ENCODE measurements at regions of chr7 and their contacts with region 1.

Region 1: GRCh38 chr7:134778941-134779740 is at the start of gene CALD1:
- DNase-seq: peak; percentile 99
- H3K4me3 ChIP-seq: peak within 1 kb of the TSS; percentile 54 to 100 (median 98)
- H3K27ac ChIP-seq: peak within 1 kb of the TSS; percentile 97
- H3K4me1 ChIP-seq: peaks cover 51% of the 10 kb centered on the region
- H3K27me3 ChIP-seq: no peaks in the 10 kb centered on the region
- CTCF ChIP-seq: no peak
- POLR2A ChIP-seq: peak; percentile 98
- total RNA-seq, gene CALD1: 307 and 313 TPM in 2 replicates

Region 2: DNA sequence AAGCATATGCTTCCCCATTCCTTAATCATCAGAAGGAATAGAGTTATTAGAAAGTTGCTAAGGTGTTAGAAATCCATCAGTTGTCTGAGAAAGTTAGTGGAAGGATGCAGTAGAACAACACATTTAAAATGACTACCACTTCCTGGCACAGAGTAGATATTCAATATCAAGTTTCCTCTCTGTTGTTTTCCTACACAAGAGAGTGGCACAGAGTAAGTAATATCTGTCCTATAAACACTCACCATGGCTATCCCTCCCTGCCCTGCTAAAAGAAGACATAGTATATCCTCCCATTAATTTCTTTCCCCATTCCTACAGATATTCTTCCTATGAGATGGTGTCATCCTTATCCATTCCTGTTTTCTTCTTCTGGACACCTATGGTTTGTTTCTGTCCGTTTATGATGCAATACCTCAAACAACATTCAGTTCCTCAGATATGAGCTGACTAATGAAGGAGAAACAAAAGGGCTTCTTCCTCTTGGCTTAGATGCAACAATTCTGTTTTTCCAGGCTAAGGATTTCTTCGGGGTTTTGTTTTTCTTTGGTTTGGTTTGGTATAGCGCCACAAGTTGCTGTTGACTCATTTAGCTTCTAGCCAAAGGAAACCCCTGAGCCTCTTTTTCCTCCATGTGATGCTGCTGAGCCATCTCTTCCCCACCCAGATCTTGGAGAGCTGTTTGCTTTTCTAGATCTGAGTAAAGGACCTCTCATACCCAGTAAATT is 165.4 kb before region 1 on chr7:
- CTCF ChIA-PET with region 1: no interaction called
- POLR2A ChIA-PET with region 1: no interaction called
- dilution Hi-C with region 1: no loop called
- intact Hi-C with region 1: loop called (anchors 2 kb)
- DNase-seq: peak; percentile 99
- H3K4me3 ChIP-seq: peak overlapping the region in 1 of 3 experiments; percentile 3
- H3K27ac ChIP-seq: peak overlapping the region; percentile 85
- H3K4me1 ChIP-seq: peaks cover 28% of the 10 kb centered on the region
- H3K27me3 ChIP-seq: no peaks in the 10 kb centered on the region
- CTCF ChIP-seq: no peak
- POLR2A ChIP-seq: peak; percentile 64

Region 3: DNA sequence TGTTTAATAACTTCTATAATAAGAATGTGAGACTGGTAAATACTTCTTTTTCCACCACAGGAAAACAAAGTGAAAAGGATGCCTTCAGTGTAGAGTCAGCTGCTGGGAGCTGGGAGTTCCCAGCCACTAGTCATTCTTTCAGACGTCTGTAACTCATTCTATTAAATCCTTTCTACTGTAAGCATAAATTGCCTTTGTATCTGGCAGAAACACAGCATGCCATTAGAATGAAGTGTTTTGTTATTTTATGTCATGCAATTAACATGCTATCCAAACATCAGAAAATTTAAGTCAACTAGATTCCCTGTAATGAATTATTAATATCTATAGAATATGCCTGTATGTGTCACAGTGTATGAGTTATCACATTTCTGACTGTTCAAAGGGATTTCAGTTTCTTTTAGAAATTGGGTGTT is 118.2 kb before region 1 on chr7:
- CTCF ChIA-PET with region 1: no interaction called
- POLR2A ChIA-PET with region 1: no interaction called
- dilution Hi-C with region 1: no loop called
- intact Hi-C with region 1: loop called (anchors 1 kb)
- DNase-seq: peak; percentile 86
- H3K4me3 ChIP-seq: no peak overlapping the region
- H3K27ac ChIP-seq: peak overlapping the region; percentile 94
- H3K4me1 ChIP-seq: peaks cover 42% of the 10 kb centered on the region
- H3K27me3 ChIP-seq: no peaks in the 10 kb centered on the region
- CTCF ChIP-seq: no peak
- POLR2A ChIP-seq: no peak

Region 4: GRCh38 chr7:134724606-134725005 is 54.5 kb before region 1 on chr7:
- CTCF ChIA-PET with region 1: interaction called, 4 read pairs
- POLR2A ChIA-PET with region 1: interaction called, 7 read pairs
- dilution Hi-C with region 1: no loop called
- intact Hi-C with region 1: loop called (anchors 1 kb)
- DNase-seq: peak; percentile 56
- H3K4me3 ChIP-seq: no peak overlapping the region
- H3K27ac ChIP-seq: no peak overlapping the region
- H3K4me1 ChIP-seq: no peaks in the 10 kb centered on the region
- H3K27me3 ChIP-seq: no peaks in the 10 kb centered on the region
- CTCF ChIP-seq: peak; percentile 58 to 72
- POLR2A ChIP-seq: no peak

Region 5: DNA sequence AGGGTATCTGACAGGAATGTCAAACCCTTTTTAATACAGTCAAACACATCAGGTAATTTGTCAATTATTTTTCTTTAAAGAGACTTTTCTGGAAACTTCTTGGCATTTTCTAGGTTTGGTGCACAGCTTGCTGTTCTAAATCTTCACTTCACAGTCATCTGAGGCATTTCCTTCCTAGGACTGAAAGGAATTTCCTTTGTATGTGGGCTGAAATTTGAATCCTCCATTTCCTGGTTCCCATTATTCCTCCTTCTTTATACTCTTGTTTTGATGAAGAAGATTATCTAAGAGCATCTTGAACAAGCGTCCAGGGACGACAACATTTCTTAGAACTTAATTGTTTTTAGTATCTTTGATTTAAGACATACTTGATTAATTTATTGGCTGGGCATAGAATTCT is 25.2 kb after region 1 on chr7:
- CTCF ChIA-PET with region 1: no interaction called
- POLR2A ChIA-PET with region 1: interaction called, 6 read pairs
- dilution Hi-C with region 1: no loop called
- intact Hi-C with region 1: loop called (anchors 1 kb)
- DNase-seq: peak; percentile 85
- H3K4me3 ChIP-seq: peak overlapping the region in 1 of 3 experiments; percentile 35
- H3K27ac ChIP-seq: peak overlapping the region; percentile 96
- H3K4me1 ChIP-seq: peaks cover 49% of the 10 kb centered on the region
- H3K27me3 ChIP-seq: no peaks in the 10 kb centered on the region
- CTCF ChIP-seq: no peak
- POLR2A ChIP-seq: no peak

Region 6: GRCh38 chr7:134870781-134871180 is 91.6 kb after region 1 on chr7:
- CTCF ChIA-PET with region 1: no interaction called
- POLR2A ChIA-PET with region 1: no interaction called
- dilution Hi-C with region 1: no loop called
- intact Hi-C with region 1: loop called (anchors 1 kb)
- DNase-seq: peak; percentile 58
- H3K4me3 ChIP-seq: no peak overlapping the region
- H3K27ac ChIP-seq: no peak overlapping the region
- H3K4me1 ChIP-seq: peaks cover 55% of the 10 kb centered on the region
- H3K27me3 ChIP-seq: no peaks in the 10 kb centered on the region
- CTCF ChIP-seq: no peak
- POLR2A ChIP-seq: no peak

Region 7: GRCh38 chr7:134943764-134944400 is 164.7 kb after region 1 on chr7:
- CTCF ChIA-PET with region 1: no interaction called
- POLR2A ChIA-PET with region 1: no interaction called
- dilution Hi-C with region 1: no loop called
- intact Hi-C with region 1: loop called (anchors 2 kb)
- DNase-seq: peak; percentile 55
- H3K4me3 ChIP-seq: no peak overlapping the region
- H3K27ac ChIP-seq: no peak overlapping the region
- H3K4me1 ChIP-seq: peaks cover 11% of the 10 kb centered on the region
- H3K27me3 ChIP-seq: no peaks in the 10 kb centered on the region
- CTCF ChIP-seq: peak; percentile 13 to 21
- POLR2A ChIP-seq: no peak